Left colon (tissue), 2 donors: ENCODE measurements at regions of chr2 and their contacts with region 1.

Region 1: DNA sequence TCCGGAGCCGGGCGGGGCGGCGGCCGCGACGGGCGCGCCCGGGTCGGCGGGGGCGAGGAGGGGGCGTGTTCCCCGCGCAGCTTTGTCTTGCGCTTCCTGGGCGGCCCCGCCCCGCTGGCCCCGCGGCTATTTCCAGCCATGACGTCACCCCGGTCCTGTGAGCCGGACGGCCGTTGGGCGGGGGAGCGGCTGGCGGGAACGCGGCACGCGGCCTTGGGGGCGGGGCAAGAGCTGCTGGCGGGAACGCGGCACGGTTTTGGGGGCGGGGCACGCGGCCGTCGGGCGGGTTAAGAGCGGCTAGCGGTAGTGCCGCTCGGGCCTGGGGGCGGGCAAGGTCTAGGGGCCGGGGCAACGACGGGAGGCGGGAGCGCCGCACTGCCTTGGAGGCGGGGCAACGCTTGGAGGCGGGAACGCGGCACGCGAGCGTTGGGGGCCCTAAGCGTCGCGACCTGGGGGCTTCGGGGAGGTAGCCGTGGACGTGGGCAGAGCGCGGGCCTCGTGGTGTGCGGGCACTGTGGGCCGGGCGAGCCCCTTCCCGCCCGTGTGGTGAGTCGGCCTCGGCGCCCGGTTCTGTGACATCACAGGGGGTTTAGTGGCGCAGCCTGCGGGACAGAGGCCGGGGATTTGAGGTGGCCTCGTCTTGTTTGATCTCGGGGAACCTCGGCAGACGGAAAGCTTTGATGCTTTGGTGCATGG is 704 bp downstream of the KLF11 start:
- DNase-seq: peak; percentile 98 to 99
- ATAC-seq: peak; percentile 82

Region 2: DNA sequence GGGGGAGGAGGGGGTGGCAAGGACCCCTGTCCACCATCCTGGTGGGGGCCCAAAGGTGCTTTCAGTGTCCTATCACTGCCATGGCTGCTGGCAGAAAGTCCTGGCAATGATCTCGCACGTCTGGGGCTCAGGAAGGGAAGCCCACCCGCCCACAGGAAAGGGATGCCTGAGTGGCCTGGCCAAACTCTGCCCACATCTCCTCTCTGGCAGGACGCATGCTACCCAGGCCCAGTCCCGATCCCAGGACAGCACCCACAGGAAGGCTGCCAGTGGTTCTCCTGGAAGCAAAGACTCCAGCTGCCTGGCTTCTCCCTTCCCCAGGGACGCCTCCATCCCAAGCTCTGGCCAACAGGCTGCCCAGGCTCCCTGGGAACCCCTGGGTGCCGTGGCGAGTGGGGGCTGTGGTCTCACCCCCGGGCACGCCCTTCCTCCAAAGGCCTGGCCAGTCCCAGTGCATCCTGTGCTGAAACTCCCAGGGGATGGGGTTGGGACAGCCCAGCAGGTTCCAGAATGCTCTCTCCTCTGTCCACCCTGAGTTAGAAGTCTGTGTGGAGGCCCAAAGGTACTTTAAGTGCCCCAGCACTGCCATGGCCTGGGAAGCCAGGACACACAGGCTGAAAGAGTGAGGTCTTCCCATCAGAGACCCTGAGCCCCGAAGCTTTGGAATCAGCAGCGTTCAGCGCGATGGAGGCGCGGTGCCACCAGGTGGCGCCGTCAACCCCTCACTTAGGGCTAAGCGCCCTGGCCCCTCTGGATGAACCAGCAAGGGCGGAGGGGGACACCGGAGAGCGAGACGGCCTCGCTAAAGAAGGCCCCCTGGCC is 230.5 kb before region 1 on chr2:
- intact Hi-C with region 1: loop called in 1 of 2 experiments (anchors 10 kb)
- DNase-seq: peak in 1 of 2 donors; percentile 83
- ATAC-seq: peak; percentile 64

Region 3: GRCh38 chr2:9984217-9984739 is 59.8 kb before region 1 on chr2:
- intact Hi-C with region 1: loop called in 1 of 2 experiments (anchors 2 kb)
- DNase-seq: no peak
- ATAC-seq: peak; percentile 58